WTC11 (cell line): ENCODE measurements at regions of chr3 and their contacts with region 1.

Region 1: DNA sequence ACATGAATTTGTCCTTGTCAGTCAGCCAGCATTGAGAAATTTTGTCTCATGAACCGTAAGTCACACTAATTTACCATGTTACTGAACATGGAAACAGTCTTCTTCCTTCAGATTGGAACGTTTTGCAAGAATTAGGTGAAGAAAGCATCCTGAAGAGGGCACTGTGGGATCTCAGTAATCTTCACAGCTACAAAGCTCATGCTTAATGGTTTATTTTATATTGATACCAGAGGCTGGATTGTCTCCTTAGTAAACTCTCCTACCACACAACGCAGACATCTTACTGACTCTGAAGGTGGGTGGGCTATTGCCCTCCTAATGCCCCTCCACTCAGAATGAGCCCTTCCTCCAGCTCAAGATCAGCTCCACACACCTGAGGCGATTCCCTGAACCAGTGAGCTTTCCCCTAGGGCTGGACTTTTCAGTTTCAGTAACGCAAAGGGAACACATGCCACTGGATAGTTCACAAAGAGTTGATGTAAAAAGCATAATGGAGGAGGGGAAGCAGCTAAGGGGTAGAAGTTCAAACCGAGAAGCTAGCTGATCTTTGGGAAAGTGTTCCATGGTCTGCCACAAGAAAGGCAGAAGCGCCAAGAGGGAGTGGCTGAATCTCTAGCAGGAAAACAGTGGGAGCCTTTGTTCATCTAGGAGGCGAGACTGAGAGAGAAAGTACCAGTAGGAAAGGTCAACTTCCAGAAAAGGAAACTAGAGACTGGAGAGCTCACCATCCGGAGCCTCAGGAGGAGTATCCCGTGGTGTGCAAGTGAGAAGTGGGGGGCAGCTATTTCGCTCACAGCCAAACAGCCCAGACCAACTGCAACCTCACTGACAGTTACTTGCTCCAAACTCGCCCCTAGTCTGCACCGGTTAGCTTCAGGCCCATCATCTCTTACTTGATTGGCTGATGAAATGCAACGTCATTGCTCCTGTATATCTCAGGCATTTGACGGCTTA is at the start of gene SLC9C1:
- DNase-seq: peak; percentile 34
- ATAC-seq: peak; percentile 83
- H3K4me3 Mint-ChIP-seq: peak within 1 kb of the TSS; percentile 57
- H3K27ac Mint-ChIP-seq: peak within 1 kb of the TSS; percentile 95
- H3K4me1 Mint-ChIP-seq: peaks cover 39% of the 10 kb centered on the region
- H3K27me3 Mint-ChIP-seq: no peaks in the 10 kb centered on the region
- CTCF ChIP-seq: 0 out of 2 replicates have a peak, but pooled peaks have one; percentile 15
- total RNA-seq, gene SLC9C1: 1.4 to 3.5 TPM (median 2.5 TPM) in 3 replicates

Region 2: DNA sequence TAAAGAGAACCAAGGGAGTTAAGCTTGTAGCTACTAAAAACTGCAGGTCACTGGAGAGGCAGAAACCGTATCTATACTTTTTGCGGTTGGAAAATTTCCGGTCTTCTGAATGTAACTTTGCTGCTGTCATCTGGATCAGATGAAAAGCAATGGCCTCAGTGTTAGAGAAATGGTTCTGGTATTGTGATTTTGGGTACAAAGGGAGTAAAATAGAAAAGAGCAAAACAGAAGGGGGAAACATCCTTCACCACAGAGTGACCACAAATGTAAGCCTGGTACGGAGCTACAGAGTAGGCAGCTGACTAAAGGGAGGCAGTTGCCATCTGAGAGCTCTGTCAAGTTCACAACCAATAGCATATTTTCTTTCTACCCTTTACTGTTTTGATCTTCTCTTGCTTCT is 746.0 kb before region 1 on chr3:
- CTCF ChIA-PET with region 1: no interaction called
- POLR2A ChIA-PET with region 1: no interaction called
- DNase-seq: no peak
- ATAC-seq: no peak
- H3K4me3 Mint-ChIP-seq: no peak overlapping the region
- H3K27ac Mint-ChIP-seq: no peak overlapping the region
- H3K4me1 Mint-ChIP-seq: no peaks in the 10 kb centered on the region
- H3K27me3 Mint-ChIP-seq: no peaks in the 10 kb centered on the region
- CTCF ChIP-seq: no peak

Region 3: DNA sequence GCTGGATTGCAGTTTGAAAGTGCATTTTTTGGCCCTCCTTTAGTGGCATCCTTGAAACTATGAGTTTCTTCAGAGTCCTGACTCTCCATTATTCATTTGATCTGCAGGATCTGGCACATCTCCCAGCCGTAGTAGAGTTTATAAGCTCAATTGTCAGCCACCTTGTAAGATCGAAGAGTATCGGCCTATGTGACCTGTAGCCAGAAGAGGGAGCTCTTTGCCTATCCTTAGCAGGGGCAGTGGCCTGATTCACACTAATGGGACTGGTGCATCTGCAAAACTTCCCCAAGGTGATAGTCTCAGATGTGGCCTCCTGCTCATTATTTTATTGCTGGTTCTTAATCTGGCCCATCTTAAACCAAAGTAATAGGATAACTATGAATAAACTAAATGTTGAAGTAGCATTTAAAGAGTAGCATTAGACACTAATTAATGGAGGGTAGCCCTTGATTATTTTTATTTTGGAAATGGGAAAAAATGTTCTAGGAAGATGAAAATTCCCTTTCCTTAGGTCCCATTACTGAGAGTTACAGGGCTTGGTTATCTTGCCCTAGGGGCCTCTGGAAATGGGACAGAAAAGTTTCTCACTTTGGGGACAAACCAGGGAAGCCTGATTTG is 181.8 kb before region 1 on chr3:
- CTCF ChIA-PET with region 1: interaction called, 26 read pairs
- POLR2A ChIA-PET with region 1: interaction called, 3 read pairs
- DNase-seq: peak; percentile 63
- ATAC-seq: peak; percentile 98
- H3K4me3 Mint-ChIP-seq: no peak overlapping the region
- H3K27ac Mint-ChIP-seq: 0 out of 2 replicates have a peak overlapping the region, but pooled peaks have one; percentile 43
- H3K4me1 Mint-ChIP-seq: peaks cover 11% of the 10 kb centered on the region
- H3K27me3 Mint-ChIP-seq: no peaks in the 10 kb centered on the region
- CTCF ChIP-seq: peak; percentile 76

Region 4: DNA sequence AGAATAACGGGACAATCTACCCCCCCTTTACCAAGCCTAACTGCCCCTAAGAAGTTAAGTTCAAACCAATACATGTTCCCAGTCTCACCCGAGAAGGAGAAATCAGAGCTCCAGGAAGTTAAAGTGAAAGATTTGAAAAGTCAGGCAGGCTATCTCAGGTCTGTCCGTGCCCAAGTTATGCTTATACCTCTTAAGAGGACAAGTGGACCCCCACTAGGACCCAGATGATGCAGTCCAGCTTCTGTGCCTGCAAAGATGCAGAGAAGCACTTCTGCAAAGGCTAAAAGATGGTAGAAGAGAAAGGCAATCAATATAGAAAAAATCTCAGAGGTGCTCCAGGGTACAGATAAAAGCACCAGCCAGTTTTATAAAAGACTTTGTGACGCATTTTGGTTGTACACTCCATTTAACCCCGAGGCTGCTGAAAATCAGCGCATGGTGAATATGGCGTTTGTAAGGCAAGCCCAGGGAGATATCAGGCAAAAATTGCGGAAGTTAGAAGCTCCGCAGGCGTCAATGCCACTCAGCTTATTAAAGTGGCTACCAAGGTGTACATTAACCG is 10.2 kb after region 1 on chr3:
- CTCF ChIA-PET with region 1: interaction called, 41 read pairs
- POLR2A ChIA-PET with region 1: interaction called, 6 read pairs
- DNase-seq: no peak
- ATAC-seq: peak; percentile 7
- H3K4me3 Mint-ChIP-seq: no peak overlapping the region
- H3K27ac Mint-ChIP-seq: no peak overlapping the region
- H3K4me1 Mint-ChIP-seq: peaks cover 21% of the 10 kb centered on the region
- H3K27me3 Mint-ChIP-seq: no peaks in the 10 kb centered on the region
- CTCF ChIP-seq: no peak

Region 5: GRCh38 chr3:112327371-112327951 is 33.8 kb after region 1 on chr3:
- CTCF ChIA-PET with region 1: interaction called, 37 read pairs
- POLR2A ChIA-PET with region 1: interaction called, 12 read pairs
- DNase-seq: no peak
- ATAC-seq: peak; percentile 93
- H3K4me3 Mint-ChIP-seq: no peak overlapping the region
- H3K27ac Mint-ChIP-seq: no peak overlapping the region
- H3K4me1 Mint-ChIP-seq: peaks cover 30% of the 10 kb centered on the region
- H3K27me3 Mint-ChIP-seq: no peaks in the 10 kb centered on the region
- CTCF ChIP-seq: peak; percentile 28; the same call in 1 of the 2 replicates

Region 6: DNA sequence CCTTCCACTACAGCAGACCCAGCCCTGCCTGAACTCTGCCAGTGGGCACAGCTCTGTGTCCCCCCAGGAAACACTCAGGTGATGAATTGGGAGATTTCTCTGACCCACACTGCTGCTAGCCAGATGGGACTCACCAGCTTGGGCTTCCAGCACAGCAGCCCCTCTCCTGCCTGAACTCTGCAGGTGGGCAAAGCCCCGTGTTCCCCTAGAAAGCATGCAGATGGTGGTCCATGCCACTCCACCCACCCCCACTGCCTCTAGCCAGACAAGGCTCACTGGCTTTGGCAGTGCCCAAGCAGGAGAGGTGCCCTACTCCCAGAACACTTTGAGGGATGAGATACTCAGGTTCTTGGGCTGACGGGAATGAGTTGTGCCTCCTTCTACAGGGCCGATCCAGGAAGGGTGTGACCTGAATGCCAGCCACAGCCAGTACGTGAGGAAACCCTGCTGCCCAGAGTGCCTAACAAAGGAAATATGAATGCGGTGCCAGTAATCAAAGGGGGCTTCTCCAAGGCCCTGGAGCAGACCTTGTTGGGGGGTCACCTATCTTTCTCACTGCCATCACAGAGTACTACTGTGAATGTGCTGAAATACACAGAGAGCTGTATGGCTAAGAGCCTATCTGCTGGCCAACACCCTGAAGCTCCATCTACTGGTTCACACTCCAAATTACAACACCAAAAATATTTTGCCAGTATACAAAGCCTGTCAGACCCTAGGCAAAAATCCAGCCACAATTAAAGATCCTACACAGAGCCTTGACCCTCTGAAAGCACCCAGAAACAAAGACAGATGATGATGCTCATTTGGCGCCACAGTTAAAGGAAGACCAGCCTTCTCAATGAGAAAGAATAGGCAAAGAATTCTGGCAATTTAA is 143.7 kb after region 1 on chr3:
- CTCF ChIA-PET with region 1: interaction called, 31 read pairs
- POLR2A ChIA-PET with region 1: no interaction called
- DNase-seq: no peak
- ATAC-seq: peak; percentile 96
- H3K4me3 Mint-ChIP-seq: no peak overlapping the region
- H3K27ac Mint-ChIP-seq: no peak overlapping the region
- H3K4me1 Mint-ChIP-seq: 0 out of 2 replicates have a peak, but pooled peaks cover 5% of the 10 kb centered on the region
- H3K27me3 Mint-ChIP-seq: peaks cover 2% of the 10 kb centered on the region
- CTCF ChIP-seq: 0 out of 2 replicates have a peak, but pooled peaks have one; percentile 52

Region 7: DNA sequence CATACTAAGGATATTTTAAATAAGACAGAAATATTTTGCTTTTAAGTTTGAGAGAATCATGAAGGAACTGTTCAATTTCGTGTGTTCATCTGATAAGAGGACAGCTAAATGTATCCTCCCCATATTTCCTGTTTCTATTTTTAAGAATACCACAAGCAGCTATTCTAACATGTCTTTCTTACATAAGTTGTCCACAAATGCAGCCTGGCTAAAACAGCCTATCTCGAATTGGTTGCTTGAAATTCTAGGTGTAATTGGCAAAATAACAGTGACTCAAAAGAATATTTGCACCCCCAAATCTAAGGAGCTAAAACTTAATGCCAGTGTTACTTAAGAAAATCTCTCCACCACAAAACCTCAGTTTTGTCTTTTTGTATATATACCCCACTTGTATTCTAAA is 170.6 kb after region 1 on chr3:
- CTCF ChIA-PET with region 1: no interaction called
- POLR2A ChIA-PET with region 1: no interaction called
- DNase-seq: no peak
- ATAC-seq: no peak
- H3K4me3 Mint-ChIP-seq: no peak overlapping the region
- H3K27ac Mint-ChIP-seq: no peak overlapping the region
- H3K4me1 Mint-ChIP-seq: peaks cover 27% of the 10 kb centered on the region
- H3K27me3 Mint-ChIP-seq: no peaks in the 10 kb centered on the region
- CTCF ChIP-seq: no peak